OCI-LY7 (cell line): ENCODE measurements at regions of chr1 and their contacts with region 1.

Region 1: DNA sequence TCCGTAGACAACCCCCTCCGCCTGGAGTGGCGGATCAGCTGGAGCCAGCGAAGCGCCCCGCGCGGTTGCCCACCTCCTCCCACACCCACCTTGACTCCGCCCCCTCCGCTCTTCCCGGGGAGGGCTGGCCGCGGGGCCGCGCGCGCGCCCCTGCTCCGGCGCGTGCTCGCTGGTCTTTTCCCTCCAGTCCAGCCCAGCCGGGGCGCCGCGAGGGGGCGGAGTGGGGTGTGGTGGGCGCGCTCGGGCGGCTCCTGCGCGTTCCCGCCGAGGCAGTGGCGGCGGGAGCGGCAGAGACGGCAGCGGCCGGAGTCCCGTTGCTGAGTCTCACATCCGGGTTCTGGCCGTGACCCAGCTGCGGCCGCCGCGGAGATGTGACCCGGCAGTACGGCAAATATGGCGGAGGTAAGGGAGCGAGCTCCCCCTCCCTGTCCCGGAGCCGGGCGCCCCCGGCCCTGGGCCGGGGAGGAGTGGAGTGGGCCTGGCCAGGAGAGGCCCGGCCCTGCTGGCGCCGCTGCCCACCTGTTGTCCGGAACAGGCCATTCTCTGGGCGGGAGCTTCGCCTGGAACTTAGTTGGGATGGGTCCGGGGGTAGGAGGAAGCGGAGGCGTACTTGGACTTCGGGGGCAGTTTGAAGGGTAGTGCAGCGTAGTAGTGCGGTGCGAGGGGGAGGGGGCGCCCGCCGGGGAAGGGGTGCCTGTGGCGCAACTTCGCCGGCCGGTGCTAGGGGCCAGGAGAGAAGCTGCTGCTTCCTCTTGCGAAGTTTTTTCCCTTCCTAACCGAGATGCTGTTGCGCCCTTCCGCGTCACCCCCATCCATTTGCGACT is 5.4 kb downstream of the MIER1 start:
- DNase-seq: peak; percentile 96
- H3K4me3 ChIP-seq: peak overlapping the region; percentile 98
- H3K27ac ChIP-seq: peak overlapping the region; percentile 86
- H3K4me1 ChIP-seq: peaks cover 60% of the 10 kb centered on the region
- CTCF ChIP-seq: peak; percentile 36; the same call in 1 of the 2 replicates

Region 2: DNA sequence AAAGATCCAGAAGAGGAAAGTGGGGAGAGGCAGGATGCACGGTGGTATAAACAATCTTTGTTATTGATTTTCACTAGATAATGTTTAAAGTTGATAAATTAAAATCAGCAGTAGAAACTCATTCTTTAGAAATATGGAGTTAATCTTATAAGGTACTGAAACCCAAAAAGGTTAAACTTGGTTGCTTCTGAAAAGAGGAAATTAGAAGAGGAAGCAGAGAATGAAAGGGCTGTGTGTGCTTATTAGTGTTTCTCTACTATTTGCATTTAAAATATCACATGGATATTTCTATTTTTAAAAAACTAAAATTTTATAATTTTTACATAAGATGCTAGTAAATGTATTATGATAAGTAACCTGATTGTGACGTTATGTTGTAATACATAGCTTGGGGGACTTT is 180.1 kb after region 1 on chr1:
- CTCF ChIA-PET with region 1: no interaction called
- POLR2A ChIA-PET with region 1: no interaction called
- intact Hi-C with region 1: loop called (anchors 2 kb)
- DNase-seq: peak; percentile 73
- H3K4me3 ChIP-seq: peak overlapping the region; percentile 46
- H3K27ac ChIP-seq: peak overlapping the region; percentile 90
- H3K4me1 ChIP-seq: peaks cover 70% of the 10 kb centered on the region
- CTCF ChIP-seq: no peak

Region 3: DNA sequence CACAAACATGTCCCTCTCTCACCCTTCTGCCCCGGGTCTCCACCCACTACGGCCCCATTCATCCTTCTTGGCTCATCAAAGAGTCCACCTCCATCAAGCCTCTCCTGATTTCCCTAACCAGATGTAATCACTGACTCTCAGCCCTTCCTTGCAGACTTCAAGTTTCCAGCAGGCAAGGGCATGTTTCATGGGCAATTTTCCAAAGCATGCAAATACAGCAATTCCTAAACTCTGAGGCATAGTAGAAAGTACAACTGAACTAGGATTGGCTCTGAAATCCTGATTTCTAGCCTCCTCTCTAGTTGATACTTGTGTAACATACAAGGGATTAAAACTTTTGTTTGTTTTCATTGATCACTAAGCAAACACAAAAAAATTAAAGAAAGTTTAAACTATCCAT is 645.6 kb after region 1 on chr1:
- CTCF ChIA-PET with region 1: no interaction called
- POLR2A ChIA-PET with region 1: no interaction called
- intact Hi-C with region 1: no loop called
- DNase-seq: no peak
- H3K4me3 ChIP-seq: no peak overlapping the region
- H3K27ac ChIP-seq: no peak overlapping the region
- H3K4me1 ChIP-seq: no peaks in the 10 kb centered on the region
- CTCF ChIP-seq: no peak